T-cell (primary cell): ENCODE measurements at regions of chr6 and their contacts with region 1.

Region 1: GRCh38 chr6:132633362-132633761 is 9.3 kb upstream of the TAAR2 start:
- DNase-seq: no peak
- ATAC-seq: no peak
- H3K4me3 ChIP-seq: no peak overlapping the region
- H3K4me3 Mint-ChIP-seq: no peak overlapping the region
- H3K27ac ChIP-seq: no peak overlapping the region
- H3K27ac Mint-ChIP-seq: no peak overlapping the region
- H3K4me1 ChIP-seq: no peaks in the 10 kb centered on the region
- H3K4me1 Mint-ChIP-seq: no peaks in the 10 kb centered on the region
- H3K27me3 ChIP-seq: peaks cover 0 to 8% of the 10 kb centered on the region in 2 experiments
- H3K27me3 Mint-ChIP-seq: peaks cover 45 to 54% of the 10 kb centered on the region in 2 donors

Region 2: DNA sequence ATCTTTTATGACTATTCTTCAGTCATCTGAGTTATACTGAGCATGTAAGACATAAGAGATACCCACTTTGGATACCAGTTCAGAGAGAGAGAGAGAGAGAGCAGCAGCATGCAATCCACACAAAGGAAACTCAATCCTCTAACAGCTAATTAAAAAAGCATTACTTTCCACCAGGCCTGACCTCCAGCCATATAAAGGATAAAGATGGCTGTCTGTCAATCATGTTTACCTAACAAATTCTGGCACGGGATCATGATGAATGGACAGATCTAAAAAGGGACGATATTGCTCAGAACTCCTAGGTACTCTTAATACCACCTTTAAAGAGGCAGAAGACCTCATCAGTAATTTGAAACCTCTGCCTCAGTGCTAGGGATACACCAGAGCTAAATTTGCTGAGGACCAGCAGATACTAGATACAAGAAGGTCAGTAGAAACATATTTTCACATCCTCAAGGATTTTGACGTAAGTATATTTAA is 340.2 kb after region 1 on chr6:
- CTCF ChIA-PET with region 1: no interaction called
- POLR2A ChIA-PET with region 1: interaction called in 1 of 2 experiments, 10 read pairs
- DNase-seq: no peak
- ATAC-seq: no peak
- H3K4me3 ChIP-seq: no peak overlapping the region
- H3K4me3 Mint-ChIP-seq: no peak overlapping the region
- H3K27ac ChIP-seq: no peak overlapping the region
- H3K27ac Mint-ChIP-seq: no peak overlapping the region
- H3K4me1 ChIP-seq: no peaks in the 10 kb centered on the region
- H3K4me1 Mint-ChIP-seq: no peaks in the 10 kb centered on the region
- H3K27me3 ChIP-seq: peaks cover 0 to 6% of the 10 kb centered on the region in 2 experiments
- H3K27me3 Mint-ChIP-seq: peaks cover 9 to 21% of the 10 kb centered on the region in 2 donors